ENCODE measurements at regions of chr7 and their contacts with region 1.

Region 1: DNA sequence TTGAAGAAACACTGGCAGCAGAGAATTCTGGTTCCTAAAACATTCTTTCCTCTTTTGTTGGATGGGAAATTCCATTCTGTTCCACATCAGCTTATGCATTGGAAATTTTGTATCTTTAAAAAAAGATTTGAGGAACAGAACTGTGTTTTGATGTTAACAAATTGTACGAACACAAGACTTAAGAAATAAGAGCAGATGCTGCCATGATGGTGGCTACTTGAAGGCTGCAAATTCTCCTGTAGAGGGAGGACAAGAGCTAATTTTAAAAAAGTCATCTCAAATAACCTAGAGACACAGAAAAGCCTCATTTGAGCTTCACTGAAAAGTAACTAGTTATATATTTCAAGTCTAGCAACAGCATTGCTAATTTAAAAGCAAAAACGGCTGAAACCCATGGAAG is 29.8 kb downstream of the NDUFB2 start:
- DNase-seq: no peak
- ATAC-seq: no peak; the same call in 1 of the 2 replicates
- H3K4me3 ChIP-seq: no peak overlapping the region
- H3K27ac ChIP-seq: no peak overlapping the region
- H3K4me1 ChIP-seq: no peaks in the 10 kb centered on the region
- H3K27me3 ChIP-seq: no peaks in the 10 kb centered on the region
- CTCF ChIP-seq: peak; percentile 52; the same call in 1 of the 2 replicates

Region 2: DNA sequence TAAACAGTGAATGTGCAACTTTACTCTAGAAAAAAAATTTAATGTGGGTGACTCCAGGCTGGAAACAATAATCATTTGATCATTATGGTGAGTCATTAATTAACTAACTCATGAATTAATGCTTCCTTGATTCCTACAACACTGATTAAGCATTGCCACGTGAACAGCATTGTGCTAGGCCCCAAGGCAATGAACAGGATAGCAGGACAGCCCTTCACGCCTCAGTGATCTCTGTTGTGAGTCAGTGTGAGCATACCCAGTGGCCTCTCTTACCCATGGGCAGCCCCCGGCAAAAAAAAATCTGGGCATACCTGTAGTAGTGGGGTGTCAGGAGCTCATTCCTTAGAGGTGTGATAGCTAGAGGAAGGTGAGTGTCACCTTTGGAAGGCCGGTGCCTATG is 161.6 kb before region 1 on chr7:
- CTCF ChIA-PET with region 1: no interaction called
- POLR2A ChIA-PET with region 1: no interaction called
- in situ Hi-C with region 1: no loop called
- intact Hi-C with region 1: no loop called
- DNase-seq: no peak
- ATAC-seq: peak; percentile 84
- H3K4me3 ChIP-seq: no peak overlapping the region
- H3K27ac ChIP-seq: no peak overlapping the region
- H3K4me1 ChIP-seq: peaks cover 12% of the 10 kb centered on the region
- H3K27me3 ChIP-seq: no peaks in the 10 kb centered on the region
- CTCF ChIP-seq: no peak

Region 3: GRCh38 chr7:140738280-140738679 is 12.0 kb after region 1 on chr7:
- CTCF ChIA-PET with region 1: interaction called, 10 read pairs
- POLR2A ChIA-PET with region 1: interaction called, 5 read pairs
- in situ Hi-C with region 1: no loop called
- intact Hi-C with region 1: no loop called
- DNase-seq: no peak
- ATAC-seq: no peak
- H3K4me3 ChIP-seq: no peak overlapping the region
- H3K27ac ChIP-seq: no peak overlapping the region
- H3K4me1 ChIP-seq: no peaks in the 10 kb centered on the region
- H3K27me3 ChIP-seq: no peaks in the 10 kb centered on the region
- CTCF ChIP-seq: no peak

Region 4: DNA sequence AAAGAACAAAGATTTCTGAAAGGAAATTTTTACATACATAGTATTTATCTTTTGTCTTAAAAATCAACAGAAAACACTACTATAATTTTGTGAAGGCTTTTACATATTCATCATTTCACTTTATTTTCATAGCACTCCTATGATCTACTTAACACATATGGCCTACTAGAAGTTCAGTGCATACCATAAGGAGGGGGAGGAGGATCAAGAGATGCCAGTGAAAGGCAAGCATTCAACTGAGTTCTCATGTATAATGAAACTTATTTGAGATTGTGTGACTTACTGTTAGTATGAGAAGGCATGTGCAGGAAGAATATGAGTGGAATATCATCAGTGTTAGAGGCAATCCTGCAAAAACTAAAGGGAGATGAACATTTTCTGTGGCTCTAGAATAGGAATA is 187.8 kb after region 1 on chr7:
- CTCF ChIA-PET with region 1: no interaction called
- POLR2A ChIA-PET with region 1: interaction called, 14 read pairs
- in situ Hi-C with region 1: no loop called
- intact Hi-C with region 1: no loop called
- DNase-seq: no peak
- ATAC-seq: no peak
- H3K4me3 ChIP-seq: no peak overlapping the region
- H3K27ac ChIP-seq: no peak overlapping the region
- H3K4me1 ChIP-seq: no peaks in the 10 kb centered on the region
- H3K27me3 ChIP-seq: no peaks in the 10 kb centered on the region
- CTCF ChIP-seq: no peak